ENCODE measurements at regions of chr4 and their contacts with region 1.

Region 1: DNA sequence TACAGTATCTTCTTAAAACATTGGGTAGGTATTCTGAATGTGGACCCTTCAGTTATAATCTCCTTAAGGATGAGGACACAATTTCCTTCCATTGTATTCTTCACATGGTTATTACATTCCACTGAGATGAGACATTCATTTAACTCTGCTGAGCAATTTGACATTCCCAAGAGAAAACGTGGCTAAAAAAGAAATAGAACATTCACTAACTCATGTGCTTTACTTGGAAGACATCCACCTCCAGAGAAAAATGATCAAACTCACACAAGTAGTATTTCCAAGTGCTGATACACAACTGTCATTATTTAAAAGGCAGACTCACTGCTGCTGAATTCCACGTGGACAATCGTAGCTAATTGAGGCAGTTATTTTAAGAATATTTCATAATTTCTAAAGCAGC is 227.9 kb upstream of the ANKRD50 start:
- DNase-seq: no peak
- ATAC-seq: peak; percentile 62
- H3K4me3 ChIP-seq: no peak overlapping the region
- H3K27ac ChIP-seq: no peak overlapping the region
- H3K4me1 ChIP-seq: peaks cover 0 to 3% of the 10 kb centered on the region in 2 donors
- H3K27me3 ChIP-seq: no peaks in the 10 kb centered on the region

Region 2: GRCh38 chr4:124712372-124713184 is 227.8 kb before region 1 on chr4 and contains the start of gene ANKRD50:
- intact Hi-C with region 1: loop called (anchors 10 kb)
- DNase-seq: peak; percentile 93 to 96
- ATAC-seq: peak; percentile 93
- H3K4me3 ChIP-seq: peak within 1 kb of the TSS; percentile 55 to 79
- H3K27ac ChIP-seq: peak within 1 kb of the TSS; percentile 95 to 100
- H3K4me1 ChIP-seq: peaks cover 4 to 10% of the 10 kb centered on the region in 2 donors
- H3K27me3 ChIP-seq: no peaks in the 10 kb centered on the region
- total RNA-seq, gene ANKRD50: 26.5 to 27.4 TPM

Region 3: GRCh38 chr4:124873361-124874171 is 66.8 kb before region 1 on chr4:
- intact Hi-C with region 1: loop called in 1 of 2 experiments (anchors 5 kb)
- DNase-seq: no peak
- ATAC-seq: no peak
- H3K4me3 ChIP-seq: no peak overlapping the region
- H3K27ac ChIP-seq: no peak overlapping the region
- H3K4me1 ChIP-seq: peaks cover 0 to 5% of the 10 kb centered on the region in 2 donors
- H3K27me3 ChIP-seq: no peaks in the 10 kb centered on the region

Region 4: GRCh38 chr4:124993838-124994237 is 53.5 kb after region 1 on chr4:
- intact Hi-C with region 1: no loop called
- DNase-seq: no peak
- ATAC-seq: no peak
- H3K4me3 ChIP-seq: no peak overlapping the region
- H3K27ac ChIP-seq: no peak overlapping the region
- H3K4me1 ChIP-seq: no peaks in the 10 kb centered on the region
- H3K27me3 ChIP-seq: no peaks in the 10 kb centered on the region

Measured in aorta (tissue), 5 donors.